BJ (cell line): ENCODE measurements at regions of chr5 and their contacts with region 1.

Region 1: DNA sequence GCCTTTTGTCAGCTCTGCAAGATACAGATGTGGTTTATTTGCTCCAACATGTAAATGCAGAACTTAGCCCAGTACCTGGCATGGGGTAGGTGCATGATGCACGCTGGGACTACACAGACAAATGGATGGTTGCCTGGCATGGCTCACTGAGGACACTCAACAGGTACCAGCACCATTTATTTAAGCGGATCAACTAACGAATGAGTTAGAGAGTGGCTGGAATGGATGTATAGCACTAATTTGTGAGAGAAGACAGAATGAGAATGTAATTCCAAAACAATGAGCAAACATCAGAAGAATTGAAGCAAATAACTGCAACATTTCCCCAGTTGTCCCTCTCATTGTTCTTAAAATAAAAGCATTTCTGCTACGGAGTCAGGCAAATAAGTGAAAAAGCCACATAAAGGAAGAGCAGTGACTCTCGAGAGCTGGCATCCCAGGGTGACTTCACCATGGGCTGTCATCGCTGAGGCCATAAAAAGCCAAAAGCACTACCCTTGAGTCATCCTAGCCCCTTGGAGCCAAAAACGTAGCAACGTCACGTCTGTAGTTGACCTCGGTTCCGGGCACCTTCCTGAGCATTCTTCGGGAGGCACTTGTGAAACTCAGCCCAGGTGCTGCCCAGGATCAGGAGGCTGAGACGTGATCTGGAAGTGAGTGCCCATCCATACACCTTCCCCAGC is 290.3 kb downstream of the NSG2 start:
- DNase-seq: no peak
- H3K4me3 ChIP-seq: no peak overlapping the region
- H3K27me3 ChIP-seq: no peaks in the 10 kb centered on the region
- CTCF ChIP-seq: no peak

Region 2: GRCh38 chr5:174751154-174752000 is 415.6 kb after region 1 on chr5:
- CTCF ChIA-PET with region 1: no interaction called
- POLR2A ChIA-PET with region 1: interaction called, 10 read pairs
- DNase-seq: no peak
- H3K4me3 ChIP-seq: peak overlapping the region; percentile 38
- H3K27me3 ChIP-seq: no peaks in the 10 kb centered on the region; the same call in 1 of the 2 replicates
- CTCF ChIP-seq: no peak